ENCODE measurements at regions of chr15 and their contacts with region 1.

Region 1: DNA sequence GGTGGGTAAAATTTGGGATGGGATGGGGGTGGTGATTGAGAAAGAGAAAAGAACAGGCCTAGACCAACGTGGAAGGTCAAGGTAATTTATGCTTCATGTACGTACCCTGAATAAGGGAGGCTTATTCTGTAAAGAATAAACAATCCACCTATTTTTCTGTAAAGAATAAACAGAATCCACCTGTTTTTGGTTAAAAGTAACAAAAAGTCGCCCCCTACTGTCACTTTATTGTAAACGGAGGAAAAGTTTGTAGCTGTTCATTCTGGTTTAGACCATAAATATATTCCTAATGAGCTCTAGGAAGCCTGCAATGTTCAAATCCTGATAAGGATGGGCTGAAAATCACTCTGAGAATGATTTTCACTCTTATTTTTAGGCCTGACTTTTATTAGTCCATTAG is 23.5 kb upstream of the SQOR start:
- DNase-seq: peak in 1 of 2 experiments; percentile 51
- H3K4me3 ChIP-seq: no peak overlapping the region
- H3K4me1 ChIP-seq: no peaks in the 10 kb centered on the region
- H3K27me3 ChIP-seq: no peaks in the 10 kb centered on the region

Region 2: DNA sequence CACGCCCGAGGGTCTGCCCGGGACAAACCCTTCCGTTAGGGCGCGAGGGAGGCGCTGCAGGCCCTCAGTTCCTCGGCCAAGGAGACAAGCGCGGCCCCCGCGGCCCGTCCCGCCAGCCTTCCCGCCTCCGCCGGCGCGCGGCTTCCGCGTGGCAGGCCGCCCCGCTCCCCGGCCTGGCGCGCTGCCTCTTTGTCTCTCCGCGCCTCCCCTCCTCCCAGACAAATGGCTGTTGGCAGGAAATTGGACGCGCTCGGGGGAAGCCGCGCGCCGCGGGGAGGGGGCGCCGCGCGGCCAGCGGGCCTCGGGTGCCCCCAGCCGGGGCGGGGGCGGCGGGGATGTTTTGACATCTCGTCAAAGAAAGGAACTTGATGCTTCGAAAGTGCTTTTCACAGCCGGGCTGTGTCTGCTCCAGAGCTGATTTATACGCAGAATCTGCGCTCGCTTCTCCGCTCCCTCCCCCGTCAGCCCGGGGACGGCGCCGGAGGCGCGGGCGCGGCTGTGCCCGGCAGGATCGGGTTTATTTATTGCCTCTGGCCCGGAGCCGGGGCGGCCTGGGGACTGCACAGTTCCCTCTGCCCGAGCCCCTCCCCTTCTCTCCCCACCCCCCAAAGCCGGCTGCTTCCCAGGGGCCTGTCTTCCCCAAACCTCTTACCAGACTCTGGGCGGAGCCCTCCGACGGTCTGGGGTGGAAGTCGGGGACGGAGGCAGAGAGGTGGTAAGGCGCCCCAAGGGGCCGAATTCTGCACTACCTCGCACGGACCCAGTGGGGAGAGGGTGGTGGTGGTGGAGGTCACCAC is 444.3 kb before region 1 on chr15:
- in situ Hi-C with region 1: loop called (anchors 25 kb)
- DNase-seq: peak; percentile 61 to 88
- H3K4me3 ChIP-seq: peak overlapping the region; percentile 35
- H3K4me1 ChIP-seq: peaks cover 13% of the 10 kb centered on the region
- H3K27me3 ChIP-seq: no peaks in the 10 kb centered on the region

Region 3: DNA sequence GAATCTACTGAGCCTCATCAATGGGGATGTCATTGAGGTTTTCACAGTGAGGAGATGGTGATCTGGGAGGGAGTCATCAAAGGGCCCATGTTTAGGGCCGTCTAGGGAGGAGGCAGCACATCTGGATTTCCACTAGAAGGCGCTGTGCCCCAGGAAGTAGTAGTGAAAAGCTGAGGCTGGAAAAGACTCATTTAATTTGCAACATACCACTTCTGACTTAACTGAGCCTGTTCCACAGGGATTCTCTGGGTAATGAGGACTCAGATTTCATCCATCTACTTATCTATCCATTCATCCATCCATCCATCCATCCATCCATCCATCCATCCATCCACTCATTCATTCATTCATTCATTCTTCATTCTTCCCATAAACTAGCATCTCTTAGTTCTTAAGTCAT is 406.1 kb before region 1 on chr15:
- in situ Hi-C with region 1: no loop called
- DNase-seq: peak; percentile 72 to 84
- H3K4me3 ChIP-seq: no peak overlapping the region
- H3K4me1 ChIP-seq: peaks cover 10% of the 10 kb centered on the region
- H3K27me3 ChIP-seq: 0 out of 2 replicates have a peak, but pooled peaks cover 3% of the 10 kb centered on the region

Region 4: GRCh38 chr15:45457641-45458433 is 153.5 kb before region 1 on chr15:
- in situ Hi-C with region 1: loop called (anchors 10 kb)
- DNase-seq: peak; percentile 81 to 91
- H3K4me3 ChIP-seq: peak overlapping the region; percentile 11
- H3K4me1 ChIP-seq: peaks cover 11% of the 10 kb centered on the region
- H3K27me3 ChIP-seq: no peaks in the 10 kb centered on the region

Region 5: GRCh38 chr15:45705510-45706473 is 94.5 kb after region 1 on chr15:
- in situ Hi-C with region 1: no loop called
- DNase-seq: peak; percentile 66 to 85
- H3K4me3 ChIP-seq: peak overlapping the region; percentile 14
- H3K4me1 ChIP-seq: 0 out of 2 replicates have a peak, but pooled peaks cover 4% of the 10 kb centered on the region
- H3K27me3 ChIP-seq: no peaks in the 10 kb centered on the region

Region 6: GRCh38 chr15:46014532-46014931 is 403.2 kb after region 1 on chr15:
- in situ Hi-C with region 1: no loop called
- DNase-seq: no peak
- H3K4me3 ChIP-seq: no peak overlapping the region
- H3K4me1 ChIP-seq: no peaks in the 10 kb centered on the region
- H3K27me3 ChIP-seq: no peaks in the 10 kb centered on the region